ENCODE measurements at regions of chr4 and their contacts with region 1.

Region 1: GRCh38 chr4:87848622-87849351 is 16.0 kb downstream of the MEPE start:
- DNase-seq: no peak
- ATAC-seq: peak; percentile 88

Region 2: GRCh38 chr4:87543835-87544461 is 304.8 kb before region 1 on chr4:
- intact Hi-C with region 1: loop called (anchors 5 kb)
- DNase-seq: no peak
- ATAC-seq: peak; percentile 54

Region 3: DNA sequence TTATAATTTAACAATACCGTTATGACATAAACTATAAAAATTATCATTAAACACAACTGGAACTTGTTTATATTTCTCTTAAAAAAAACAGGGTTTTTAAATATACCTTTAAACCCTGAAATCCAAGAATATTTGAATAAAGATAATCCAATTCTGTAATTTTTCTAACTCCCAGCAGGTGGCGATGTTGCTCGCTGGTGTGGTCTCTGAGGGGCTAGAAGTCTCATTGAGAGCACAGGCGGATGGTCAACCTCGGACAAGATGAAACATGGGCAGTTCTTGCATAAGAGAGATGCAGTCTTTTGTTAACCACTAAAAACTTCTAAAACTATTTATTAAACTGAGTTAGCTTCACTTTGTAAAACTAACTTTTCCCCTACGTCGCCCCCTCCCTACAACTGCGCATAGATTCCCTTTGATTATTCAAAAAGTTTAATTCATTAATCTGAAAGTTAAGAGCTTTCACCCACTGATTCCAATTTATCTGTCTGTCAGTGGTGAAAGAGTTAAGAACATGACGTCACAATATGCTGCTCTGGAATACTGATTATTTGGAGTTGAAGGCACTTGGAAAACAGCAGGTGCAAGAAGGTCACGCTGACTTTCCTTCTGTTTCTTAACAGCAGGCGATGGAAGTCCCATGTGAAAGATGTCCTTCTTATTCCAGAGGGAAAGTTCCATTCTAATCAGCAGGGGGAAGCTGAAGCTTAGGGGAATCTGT is 169.2 kb before region 1 on chr4:
- intact Hi-C with region 1: loop called (anchors 2 kb)
- DNase-seq: peak; percentile 48
- ATAC-seq: peak; percentile 90

Region 4: DNA sequence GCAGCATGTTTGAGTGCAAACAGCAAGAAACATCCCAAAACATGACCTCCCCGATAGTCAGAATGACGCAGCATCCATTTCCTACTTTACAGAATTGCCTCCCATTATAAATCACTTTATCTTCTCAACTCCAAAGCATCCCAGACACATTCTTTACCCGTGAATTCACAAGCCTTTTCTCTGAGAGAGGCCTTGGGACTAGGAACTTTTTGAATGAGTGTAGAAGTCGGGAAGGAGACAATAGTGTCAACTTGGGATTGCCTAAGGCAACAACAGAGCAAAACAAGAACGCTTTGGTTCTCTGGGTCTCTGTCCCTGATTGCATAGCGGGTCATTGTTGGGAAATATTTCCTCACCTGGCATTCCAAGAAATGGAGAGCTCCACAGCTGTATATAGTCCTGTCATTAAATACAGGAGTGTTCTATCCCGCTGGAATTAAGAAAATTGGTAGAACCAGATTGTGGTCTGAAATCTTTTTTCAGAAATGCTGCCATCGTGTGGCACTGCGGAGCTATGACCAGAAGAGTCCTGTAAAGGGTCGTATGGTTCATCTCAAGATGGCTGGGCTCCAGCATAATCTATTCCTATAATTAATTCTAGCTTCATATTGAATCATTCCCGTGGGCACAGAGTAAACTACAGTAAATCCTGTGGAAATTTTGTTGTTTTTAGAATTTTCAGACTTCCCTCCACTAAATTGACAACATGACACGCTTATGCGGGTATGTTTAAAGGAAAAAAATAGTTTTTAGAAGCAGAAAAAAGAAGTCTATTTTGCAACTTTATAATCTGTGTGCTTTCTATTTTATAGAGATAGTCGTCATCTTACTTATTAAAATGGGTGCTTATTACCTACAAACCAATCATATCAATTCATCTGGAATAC is 124.7 kb after region 1 on chr4:
- intact Hi-C with region 1: loop called (anchors 2 kb)
- DNase-seq: peak; percentile 58
- ATAC-seq: peak; percentile 71

Region 5: DNA sequence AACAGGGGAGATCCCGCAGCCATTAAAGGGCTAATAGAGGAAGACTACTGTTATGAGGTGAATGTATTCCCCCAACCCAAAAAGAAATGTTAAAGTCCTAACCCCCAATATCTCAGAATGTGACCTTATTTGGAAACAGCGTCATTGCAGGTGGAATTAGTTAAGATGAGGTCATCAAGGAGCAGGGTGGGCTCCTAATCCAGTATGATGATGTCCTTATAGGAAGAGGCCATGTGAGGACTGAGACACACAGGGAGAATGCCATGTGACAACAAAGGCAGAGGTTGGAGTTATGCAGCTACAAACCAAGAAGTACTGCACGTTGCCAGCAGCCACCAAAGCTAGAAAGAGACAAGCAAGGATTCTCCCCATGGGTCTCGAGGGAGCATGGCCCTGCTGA is 141.0 kb after region 1 on chr4:
- intact Hi-C with region 1: no loop called
- DNase-seq: no peak
- ATAC-seq: no peak

Region 6: GRCh38 chr4:88211473-88212252 is 362.9 kb after region 1 on chr4:
- intact Hi-C with region 1: loop called (anchors 5 kb)
- DNase-seq: no peak
- ATAC-seq: peak; percentile 63